Breast epithelium (tissue), 4 donors: ENCODE measurements at regions of chr1 and their contacts with region 1.

Region 1: DNA sequence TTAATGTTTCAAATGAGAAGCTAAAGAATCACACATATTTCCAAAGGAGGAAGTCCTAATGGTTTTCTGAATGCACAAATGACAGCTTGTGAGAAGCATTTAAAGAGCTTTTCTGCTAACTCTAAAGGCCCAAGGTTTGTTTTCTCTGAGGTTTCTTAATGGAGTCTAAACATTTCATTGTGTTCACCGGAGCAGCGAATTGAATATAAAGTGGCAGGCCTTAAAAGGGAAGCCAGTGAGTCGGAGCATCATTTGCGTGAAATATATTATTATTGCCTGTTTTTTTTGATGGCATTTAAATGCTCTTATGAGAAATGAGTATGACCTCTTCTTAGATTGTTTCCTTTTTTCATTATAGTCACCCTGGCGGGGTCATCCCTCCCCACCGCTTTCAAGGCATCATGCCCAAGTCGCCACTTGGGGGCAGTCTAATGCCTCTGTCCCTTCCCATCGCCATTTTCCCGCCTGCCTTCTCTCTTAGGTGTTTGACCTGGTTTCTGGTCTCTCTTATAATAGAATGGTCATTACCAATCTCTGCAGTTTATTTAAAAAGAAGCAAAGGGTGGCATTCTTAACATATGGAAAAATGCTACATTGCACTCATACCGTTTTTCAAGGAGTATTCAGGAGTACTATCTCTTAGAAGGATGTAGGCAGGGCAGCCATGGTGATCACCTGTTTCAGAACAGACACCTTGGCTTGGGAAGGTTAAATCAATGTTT is 25.3 kb upstream of the OVAAL start:
- DNase-seq: peak in 1 of 2 donors; percentile 63
- H3K4me3 ChIP-seq: no peak overlapping the region
- H3K27ac ChIP-seq: no peak overlapping the region
- H3K4me1 ChIP-seq: no peaks in the 10 kb centered on the region
- H3K27me3 ChIP-seq: no peaks in the 10 kb centered on the region
- CTCF ChIP-seq: peak; percentile 29 to 72 (median 42)
- POLR2A ChIP-seq: no peak

Region 2: DNA sequence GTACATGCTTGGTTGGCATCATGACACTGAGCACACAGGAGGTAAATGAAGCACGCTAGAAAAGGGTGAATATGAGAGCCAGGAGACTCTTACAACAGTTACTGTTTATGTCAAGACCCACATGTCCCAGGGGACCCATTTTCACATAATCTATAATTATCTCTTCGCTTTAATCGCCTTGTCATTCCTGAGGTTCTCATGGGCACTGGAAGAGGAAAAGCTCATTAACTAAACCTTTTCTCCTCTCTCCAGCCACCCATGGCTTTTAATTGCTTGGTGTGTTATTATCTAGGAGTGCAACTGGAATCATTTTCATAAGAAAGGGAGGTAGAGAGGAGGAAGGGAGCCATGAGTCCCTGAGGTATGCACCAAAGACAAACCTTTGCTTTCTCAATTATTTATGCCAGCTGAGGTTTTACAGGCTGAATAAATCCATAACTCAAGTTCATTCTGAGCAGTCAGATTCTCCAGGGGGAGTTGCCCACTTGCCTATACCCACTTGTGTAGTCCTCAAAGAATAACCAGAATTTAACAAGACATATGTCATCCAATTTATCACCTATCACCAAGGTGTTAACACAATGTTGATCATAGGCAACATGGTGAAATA is 108.5 kb before region 1 on chr1:
- intact Hi-C with region 1: no loop called
- DNase-seq: no peak
- H3K4me3 ChIP-seq: no peak overlapping the region
- H3K27ac ChIP-seq: no peak overlapping the region
- H3K4me1 ChIP-seq: no peaks in the 10 kb centered on the region
- H3K27me3 ChIP-seq: no peaks in the 10 kb centered on the region
- CTCF ChIP-seq: no peak
- POLR2A ChIP-seq: no peak

Region 3: DNA sequence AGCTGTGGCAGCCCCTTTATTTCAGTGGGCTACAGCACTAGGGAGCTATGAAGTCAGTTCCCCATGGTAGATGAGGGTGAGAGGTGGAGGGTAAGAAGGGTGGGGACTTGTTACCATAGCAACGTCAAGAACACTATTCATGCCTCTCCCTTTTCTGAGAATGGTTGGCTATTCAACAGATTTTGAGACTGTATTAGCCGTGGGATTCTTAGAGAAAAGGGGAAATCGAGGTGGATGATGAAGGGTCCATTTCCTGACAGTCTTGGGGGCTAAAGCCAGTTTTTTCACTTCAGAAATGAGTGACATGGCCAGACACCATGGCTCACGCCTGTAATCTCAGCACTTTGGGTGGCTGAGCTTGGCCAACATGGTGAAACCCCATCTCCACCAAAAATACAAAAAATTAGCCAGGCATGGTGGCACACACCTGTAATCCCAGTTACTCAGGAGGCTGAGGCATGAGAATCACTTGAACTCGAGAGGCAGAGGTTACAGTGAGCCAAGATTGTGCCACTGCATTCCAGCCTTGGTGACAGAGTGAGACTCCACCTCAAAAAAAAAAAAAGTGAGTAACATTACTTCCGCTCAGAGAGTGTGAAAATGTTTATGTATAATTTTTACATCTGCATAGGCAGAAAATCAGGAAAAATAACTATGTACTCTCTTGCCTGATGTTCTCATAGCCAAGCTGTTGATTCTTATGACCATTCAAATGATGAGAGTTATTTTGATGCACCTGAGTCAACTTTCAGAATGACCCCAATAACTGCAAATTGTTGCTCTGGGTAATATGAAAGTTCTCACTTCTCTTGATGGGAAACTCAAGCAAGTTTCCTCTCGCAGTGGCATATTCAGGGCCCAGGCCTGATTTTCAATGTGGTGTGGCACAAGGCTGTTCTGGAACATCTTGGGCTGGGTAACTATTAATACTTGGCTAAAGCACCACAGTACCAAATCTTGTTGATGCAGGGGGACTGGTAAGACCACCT is 1893.3 kb after region 1 on chr1:
- intact Hi-C with region 1: loop called (anchors 10 kb)
- DNase-seq: no peak
- H3K4me3 ChIP-seq: no peak overlapping the region
- H3K27ac ChIP-seq: no peak overlapping the region
- H3K4me1 ChIP-seq: no peaks in the 10 kb centered on the region
- H3K27me3 ChIP-seq: no peaks in the 10 kb centered on the region
- CTCF ChIP-seq: no peak
- POLR2A ChIP-seq: no peak